SK-N-SH (cell line): ENCODE measurements at regions of chr1 and their contacts with region 1.

Region 1: DNA sequence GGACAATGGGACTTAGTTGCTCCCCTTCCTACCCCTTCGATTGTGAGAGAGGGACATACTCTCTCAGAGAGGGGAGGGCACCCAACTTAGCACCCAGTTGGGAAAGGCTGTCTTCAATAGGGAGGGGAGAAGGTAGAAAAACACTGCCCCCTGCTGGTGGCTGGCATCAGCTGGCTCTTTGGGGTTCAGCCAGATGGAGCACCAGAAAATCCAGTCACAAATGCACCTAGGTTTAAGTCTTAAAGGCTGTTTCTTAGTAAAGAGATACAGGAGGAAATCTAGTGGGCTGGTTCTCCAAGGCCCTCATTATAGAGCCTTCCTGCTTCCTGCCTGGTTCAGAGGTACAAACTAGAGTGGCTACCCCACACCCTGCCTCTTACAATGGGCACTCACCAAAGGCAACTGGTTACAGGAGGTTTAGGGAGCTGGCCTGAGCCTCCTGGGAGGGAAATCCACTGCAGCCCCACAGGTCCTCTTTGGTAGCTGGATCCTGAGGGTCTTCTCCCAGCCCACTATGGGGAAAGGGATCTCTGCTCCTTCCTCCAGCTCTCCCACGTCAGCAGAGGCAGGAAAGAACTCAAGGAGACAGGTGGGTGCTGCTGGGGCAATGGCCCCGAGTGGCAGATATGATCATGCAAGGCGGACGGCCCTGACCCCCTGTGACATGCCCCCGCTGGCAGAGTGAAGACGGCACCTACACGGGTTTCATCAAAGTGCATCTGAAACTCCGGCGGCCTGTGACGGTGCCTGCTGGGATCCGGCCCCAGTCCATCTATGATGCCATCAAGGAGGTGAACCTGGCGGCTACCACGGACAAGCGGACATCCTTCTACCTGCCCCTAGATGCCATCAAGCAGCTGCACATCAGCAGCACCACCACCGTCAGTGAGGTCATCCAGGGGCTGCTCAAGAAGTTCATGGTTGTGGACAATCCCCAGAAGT is 28.3 kb downstream of the EIF2D start:
- DNase-seq: peak; percentile 84
- H3K4me3 ChIP-seq: peak overlapping the region in 1 of 2 experiments; percentile 17; a peak in 1 of 4 replicates
- H3K27ac ChIP-seq: no peak overlapping the region
- H3K4me1 ChIP-seq: peaks cover 8 to 9% of the 10 kb centered on the region in 2 experiments; a peak in 3 of 4 replicates
- H3K27me3 ChIP-seq: no peaks in the 10 kb centered on the region
- CTCF ChIP-seq: peak; percentile 93
- EP300 ChIP-seq: no peak
- RAD21 ChIP-seq: peak; percentile 85

Region 2: DNA sequence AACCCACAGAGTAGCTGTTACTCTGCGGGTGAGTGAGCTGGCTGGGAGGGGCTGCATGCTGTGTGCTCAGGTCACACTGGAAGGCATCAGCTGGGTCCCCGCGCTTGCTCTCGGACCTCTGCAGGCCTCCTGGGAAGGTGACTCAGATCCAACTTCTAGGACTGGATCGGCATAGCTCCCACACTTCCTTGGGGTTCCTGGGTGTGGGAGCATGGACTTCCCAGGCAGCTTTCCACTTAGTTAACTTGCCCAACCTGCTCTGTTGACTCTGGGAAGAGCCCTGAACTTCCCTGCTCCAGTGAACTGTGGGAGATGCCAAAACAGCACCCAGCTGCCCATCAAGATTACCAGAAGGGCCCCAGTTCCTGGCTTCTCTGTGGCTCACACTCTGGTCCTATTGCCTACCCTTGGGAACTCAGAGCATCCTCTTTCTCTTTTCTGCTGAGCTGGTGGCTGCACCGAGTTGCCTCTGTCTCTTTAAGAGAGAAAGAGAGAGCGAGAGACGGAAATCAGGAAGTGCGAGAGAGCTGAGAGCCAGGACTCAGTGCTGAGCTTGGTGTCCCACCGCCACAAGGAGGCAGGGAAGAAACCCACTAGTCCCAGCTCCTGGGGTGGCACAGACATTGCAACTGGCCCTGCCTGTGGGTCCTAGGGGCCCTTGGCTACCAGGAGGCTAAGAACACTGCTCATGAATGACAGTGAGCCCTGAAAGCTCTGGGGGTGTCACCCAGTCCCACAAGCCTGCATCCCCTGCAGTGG is 113.9 kb before region 1 on chr1 and contains the start of gene IKBKE:
- CTCF ChIA-PET with region 1: interaction called, 12 read pairs
- POLR2A ChIA-PET with region 1: interaction called, 4 read pairs
- DNase-seq: no peak
- H3K4me3 ChIP-seq: peak within 1 kb of the TSS; percentile 57 to 83
- H3K27ac ChIP-seq: peak within 1 kb of the TSS in 1 of 2 experiments; percentile 56; a peak in 2 of 4 replicates
- H3K4me1 ChIP-seq: peaks cover 13 to 25% of the 10 kb centered on the region in 2 experiments; a peak in 2 of 4 replicates
- H3K27me3 ChIP-seq: no peaks in the 10 kb centered on the region
- CTCF ChIP-seq: peak; percentile 36
- EP300 ChIP-seq: no peak
- RAD21 ChIP-seq: no peak
- polyA plus RNA-seq, gene IKBKE: 14.2 and 14.5 TPM in 2 replicates

Region 3: DNA sequence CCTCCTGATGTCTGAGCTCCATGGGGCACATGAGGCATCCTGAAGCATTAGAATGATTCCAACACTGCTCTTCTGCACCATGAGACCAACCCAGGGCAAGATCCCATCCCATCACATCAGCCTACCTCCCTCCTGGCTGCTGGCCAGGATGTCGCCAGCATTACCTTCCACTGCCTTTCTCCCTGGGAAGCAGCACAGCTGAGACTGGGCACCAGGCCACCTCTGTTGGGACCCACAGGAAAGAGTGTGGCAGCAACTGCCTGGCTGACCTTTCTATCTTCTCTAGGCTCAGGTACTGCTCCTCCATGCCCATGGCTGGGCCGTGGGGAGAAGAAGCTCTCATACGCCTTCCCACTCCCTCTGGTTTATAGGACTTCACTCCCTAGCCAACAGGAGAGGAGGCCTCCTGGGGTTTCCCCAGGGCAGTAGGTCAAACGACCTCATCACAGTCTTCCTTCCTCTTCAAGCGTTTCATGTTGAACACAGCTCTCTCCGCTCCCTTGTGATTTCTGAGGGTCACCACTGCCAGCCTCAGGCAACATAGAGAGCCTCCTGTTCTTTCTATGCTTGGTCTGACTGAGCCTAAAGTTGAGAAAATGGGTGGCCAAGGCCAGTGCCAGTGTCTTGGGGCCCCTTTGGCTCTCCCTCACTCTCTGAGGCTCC is 87.7 kb before region 1 on chr1:
- CTCF ChIA-PET with region 1: interaction called, 231 read pairs
- POLR2A ChIA-PET with region 1: no interaction called
- DNase-seq: no peak
- H3K4me3 ChIP-seq: no peak overlapping the region
- H3K27ac ChIP-seq: no peak overlapping the region; a peak in 1 of 4 replicates
- H3K4me1 ChIP-seq: peaks cover 16 to 19% of the 10 kb centered on the region in 2 experiments; a peak in 2 of 4 replicates
- H3K27me3 ChIP-seq: no peaks in the 10 kb centered on the region
- CTCF ChIP-seq: no peak
- EP300 ChIP-seq: no peak
- RAD21 ChIP-seq: no peak

Region 4: GRCh38 chr1:206544562-206545257 is 39.3 kb before region 1 on chr1:
- CTCF ChIA-PET with region 1: interaction called, 241 read pairs
- POLR2A ChIA-PET with region 1: no interaction called
- DNase-seq: peak; percentile 86
- H3K4me3 ChIP-seq: no peak overlapping the region; a peak in 1 of 4 replicates
- H3K27ac ChIP-seq: no peak overlapping the region
- H3K4me1 ChIP-seq: no peaks in the 10 kb centered on the region; a peak in 1 of 4 replicates
- H3K27me3 ChIP-seq: no peaks in the 10 kb centered on the region; the same call in 1 of the 2 replicates
- CTCF ChIP-seq: peak; percentile 86
- EP300 ChIP-seq: no peak
- RAD21 ChIP-seq: peak; percentile 73

Region 5: GRCh38 chr1:206556750-206557635 is 27.0 kb before region 1 on chr1:
- CTCF ChIA-PET with region 1: interaction called, 18 read pairs
- POLR2A ChIA-PET with region 1: no interaction called
- DNase-seq: peak; percentile 87
- H3K4me3 ChIP-seq: peak overlapping the region; percentile 61 to 69
- H3K27ac ChIP-seq: no peak overlapping the region
- H3K4me1 ChIP-seq: peaks cover 0 to 10% of the 10 kb centered on the region in 2 experiments; a peak in 2 of 4 replicates
- H3K27me3 ChIP-seq: no peaks in the 10 kb centered on the region; the same call in 1 of the 2 replicates
- CTCF ChIP-seq: no peak
- EP300 ChIP-seq: peak in 1 of 2 experiments; percentile 11; a peak in 1 of 4 replicates
- RAD21 ChIP-seq: no peak

Region 6: DNA sequence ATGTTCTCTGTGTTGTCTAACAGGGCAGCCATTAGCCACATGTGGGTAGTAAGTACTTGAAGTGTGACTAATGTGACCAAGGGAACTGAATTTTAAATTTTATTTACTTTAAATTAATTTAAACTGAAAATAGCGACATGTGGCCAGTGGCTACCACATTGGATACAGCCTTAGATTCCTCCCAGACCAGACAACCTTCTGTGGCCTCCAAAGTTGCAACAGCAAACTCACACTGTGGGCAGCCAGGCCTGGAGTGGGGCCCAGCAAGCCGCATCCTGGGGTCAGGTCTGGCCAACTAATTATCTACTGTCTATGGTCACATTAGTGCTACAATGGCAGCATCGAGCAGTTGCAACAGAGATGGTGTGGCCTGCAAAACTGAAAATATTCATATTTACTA is 16.5 kb after region 1 on chr1:
- CTCF ChIA-PET with region 1: interaction called, 26 read pairs
- POLR2A ChIA-PET with region 1: no interaction called
- DNase-seq: no peak
- H3K4me3 ChIP-seq: no peak overlapping the region
- H3K27ac ChIP-seq: no peak overlapping the region
- H3K4me1 ChIP-seq: no peaks in the 10 kb centered on the region
- H3K27me3 ChIP-seq: no peaks in the 10 kb centered on the region
- CTCF ChIP-seq: no peak
- EP300 ChIP-seq: no peak
- RAD21 ChIP-seq: no peak

Region 7: GRCh38 chr1:206804020-206804750 is 220.2 kb after region 1 on chr1:
- CTCF ChIA-PET with region 1: no interaction called
- POLR2A ChIA-PET with region 1: no interaction called
- DNase-seq: no peak
- H3K4me3 ChIP-seq: no peak overlapping the region
- H3K27ac ChIP-seq: peak overlapping the region in 1 of 2 experiments; percentile 90; a peak in 1 of 4 replicates
- H3K4me1 ChIP-seq: peaks cover 0 to 26% of the 10 kb centered on the region in 2 experiments; a peak in 2 of 4 replicates
- H3K27me3 ChIP-seq: peaks cover 14% of the 10 kb centered on the region; the same call in 1 of the 2 replicates
- CTCF ChIP-seq: no peak
- EP300 ChIP-seq: peak in 1 of 2 experiments; percentile 43; a peak in 1 of 4 replicates
- RAD21 ChIP-seq: no peak